K562 (cell line): ENCODE measurements at regions of chr5 and their contacts with region 1.

Region 1: DNA sequence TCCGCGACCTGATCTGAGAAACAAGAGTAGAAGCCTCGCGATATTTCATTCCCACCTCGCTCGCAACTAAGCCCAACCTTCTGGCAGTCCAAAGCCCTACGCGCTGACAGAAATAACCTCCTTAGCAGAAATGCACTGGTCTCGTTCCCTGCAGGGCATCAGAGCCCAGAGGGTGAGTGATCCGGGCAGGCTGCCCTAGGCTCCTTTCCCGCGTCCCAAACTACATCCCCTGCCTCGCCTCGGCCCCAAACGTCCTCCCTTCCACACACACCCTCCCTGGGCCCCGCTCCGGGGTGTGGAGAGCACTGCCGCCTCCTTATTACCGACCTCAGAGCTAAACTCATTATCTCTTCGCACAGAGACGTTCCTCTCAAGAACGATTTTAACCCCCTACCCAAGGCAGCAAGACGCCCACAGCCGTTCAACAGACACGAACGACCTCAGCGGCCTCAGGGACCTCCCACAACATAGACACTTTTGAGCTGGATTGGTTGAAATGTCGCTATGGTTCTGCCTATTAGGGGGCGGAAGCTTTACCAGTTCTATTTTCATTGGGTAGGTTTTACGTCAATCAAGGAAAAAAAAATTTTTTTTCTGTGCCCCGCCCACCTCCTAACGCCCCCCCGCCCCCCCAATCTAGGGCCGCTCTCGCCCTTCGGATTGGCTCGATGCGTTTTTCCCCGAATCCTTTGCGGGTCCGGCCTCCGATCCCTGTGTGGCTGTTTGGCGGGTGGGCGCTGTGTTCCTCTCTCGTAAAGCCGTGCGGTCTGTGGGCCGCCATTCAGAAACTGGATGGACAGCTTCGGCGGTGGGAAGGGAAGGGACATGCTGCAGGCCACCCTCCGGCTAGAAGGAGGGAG is at the start of gene CETN3:
- DNase-seq: peak; percentile 92 to 96 (median 94)
- ATAC-seq: peak; percentile 89
- H3K4me3 ChIP-seq: peak within 1 kb of the TSS; percentile 83
- H3K27ac ChIP-seq: peak within 1 kb of the TSS; percentile 99
- H3K4me1 ChIP-seq: no peaks in the 10 kb centered on the region; a peak in 1 of 5 replicates
- H3K27me3 ChIP-seq: no peaks in the 10 kb centered on the region
- CTCF ChIP-seq: 0 out of 6 replicates have a peak, but pooled peaks of 1 of the 3 experiments have one; percentile 3
- EP300 ChIP-seq: no peak
- POLR2A ChIP-seq: peak; percentile 99
- RAD21 ChIP-seq: no peak
- polyA plus RNA-seq, gene CETN3: 80.5 to 91.3 TPM

Region 2: DNA sequence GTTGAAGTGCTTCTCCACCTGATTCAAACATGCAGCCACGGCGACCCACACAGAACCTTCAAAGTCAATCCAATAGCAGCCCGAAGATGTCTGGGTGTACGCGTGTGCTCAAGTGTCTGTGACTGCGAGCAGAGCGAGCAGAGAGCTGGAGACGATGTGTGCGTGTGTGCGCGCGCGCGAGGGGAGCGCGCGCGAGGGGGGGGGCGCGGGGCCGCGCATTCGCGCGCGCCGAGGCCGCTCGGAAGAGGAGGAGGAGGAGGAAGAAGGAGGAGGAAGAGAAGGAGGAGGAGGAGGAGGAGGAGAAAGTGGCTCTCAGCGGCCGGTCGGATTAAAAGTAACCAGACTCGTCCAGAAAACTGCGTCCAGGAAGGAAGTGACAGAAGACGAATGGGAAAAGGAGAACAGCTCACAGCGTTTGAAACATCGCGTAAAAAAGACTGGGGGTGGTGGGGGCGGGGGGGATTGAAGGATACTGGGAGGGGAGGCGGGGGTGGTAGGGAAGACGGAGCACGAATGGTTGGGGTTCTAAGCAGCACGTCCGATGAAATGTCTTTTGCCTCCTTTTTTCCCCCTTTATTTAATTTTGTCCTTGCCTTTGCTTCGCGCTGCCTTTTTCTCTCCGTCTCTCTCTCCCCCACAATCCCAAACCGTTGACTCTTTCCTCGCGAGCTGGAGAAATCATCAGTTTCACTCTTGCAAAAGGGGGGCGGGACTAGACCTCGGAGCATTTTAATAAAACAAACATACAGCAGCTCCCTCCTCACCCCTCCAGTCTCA is 1526.3 kb before region 1 on chr5 and contains the start of gene MEF2C:
- CTCF ChIA-PET with region 1: no interaction called
- POLR2A ChIA-PET with region 1: no interaction called
- in situ Hi-C with region 1: no loop called
- intact Hi-C with region 1: loop called (anchors 5 kb)
- DNase-seq: peak; percentile 84 to 89 (median 86)
- ATAC-seq: peak; percentile 74
- H3K4me3 ChIP-seq: peak within 1 kb of the TSS; percentile 55
- H3K27ac ChIP-seq: peak within 1 kb of the TSS; percentile 87
- H3K4me1 ChIP-seq: peaks cover 3 to 8% of the 10 kb centered on the region in 2 experiments; a peak in 4 of 5 replicates
- H3K27me3 ChIP-seq: no peaks in the 10 kb centered on the region
- CTCF ChIP-seq: no peak
- EP300 ChIP-seq: peak; percentile 22; the same call in 1 of the 2 replicates
- POLR2A ChIP-seq: peak; percentile 59; the same call in 1 of the 2 replicates
- RAD21 ChIP-seq: no peak
- polyA plus RNA-seq, gene MEF2C: 48.2 to 66.3 TPM

Region 3: DNA sequence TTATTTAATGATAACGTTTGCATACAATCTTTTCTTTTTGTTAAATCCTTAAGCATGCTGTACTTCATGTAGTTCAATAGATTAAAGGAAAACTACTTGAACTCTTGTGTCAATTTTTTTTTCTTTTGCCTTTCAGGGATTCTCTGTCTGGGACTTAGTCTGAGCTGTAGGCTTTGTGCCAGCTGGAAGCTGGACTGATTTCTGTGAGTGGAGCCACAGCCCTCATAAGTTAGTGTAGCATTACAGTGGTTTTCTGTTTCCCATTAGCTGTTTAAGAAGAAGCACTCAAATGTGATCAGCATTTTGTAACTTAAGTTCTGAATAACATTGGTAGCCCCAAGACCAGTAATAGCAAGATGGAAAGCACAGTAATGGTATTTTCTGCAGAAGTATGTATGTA is 1196.0 kb before region 1 on chr5:
- CTCF ChIA-PET with region 1: no interaction called
- POLR2A ChIA-PET with region 1: no interaction called
- in situ Hi-C with region 1: no loop called
- intact Hi-C with region 1: no loop called
- DNase-seq: no peak
- ATAC-seq: no peak
- H3K4me3 ChIP-seq: no peak overlapping the region
- H3K27ac ChIP-seq: no peak overlapping the region
- H3K4me1 ChIP-seq: no peaks in the 10 kb centered on the region
- H3K27me3 ChIP-seq: no peaks in the 10 kb centered on the region
- CTCF ChIP-seq: no peak
- EP300 ChIP-seq: no peak
- POLR2A ChIP-seq: no peak
- RAD21 ChIP-seq: no peak

Region 4: DNA sequence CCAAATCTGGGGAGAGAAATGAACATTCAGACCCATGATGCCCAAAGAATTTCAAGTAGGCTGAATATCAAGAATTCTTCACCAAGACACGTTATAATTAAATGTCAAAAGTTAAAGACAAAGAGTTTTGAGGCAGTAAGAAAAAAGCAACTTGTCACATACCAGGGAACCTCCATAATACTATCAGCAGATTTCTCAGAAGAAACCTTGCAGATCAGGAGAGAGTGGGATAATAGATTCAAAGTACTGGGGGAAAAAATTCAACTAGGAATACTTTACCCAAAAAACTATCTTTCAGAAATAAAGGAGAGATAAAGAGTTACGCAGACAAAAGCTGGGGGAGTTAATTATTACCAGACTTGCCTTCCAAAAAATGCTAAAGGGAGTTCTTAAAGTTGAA is 516.0 kb before region 1 on chr5:
- CTCF ChIA-PET with region 1: no interaction called
- POLR2A ChIA-PET with region 1: no interaction called
- in situ Hi-C with region 1: no loop called
- intact Hi-C with region 1: no loop called
- DNase-seq: no peak
- ATAC-seq: no peak
- H3K4me3 ChIP-seq: no peak overlapping the region
- H3K27ac ChIP-seq: no peak overlapping the region
- H3K4me1 ChIP-seq: no peaks in the 10 kb centered on the region
- H3K27me3 ChIP-seq: no peaks in the 10 kb centered on the region
- CTCF ChIP-seq: no peak
- EP300 ChIP-seq: no peak
- POLR2A ChIP-seq: no peak
- RAD21 ChIP-seq: no peak

Region 5: DNA sequence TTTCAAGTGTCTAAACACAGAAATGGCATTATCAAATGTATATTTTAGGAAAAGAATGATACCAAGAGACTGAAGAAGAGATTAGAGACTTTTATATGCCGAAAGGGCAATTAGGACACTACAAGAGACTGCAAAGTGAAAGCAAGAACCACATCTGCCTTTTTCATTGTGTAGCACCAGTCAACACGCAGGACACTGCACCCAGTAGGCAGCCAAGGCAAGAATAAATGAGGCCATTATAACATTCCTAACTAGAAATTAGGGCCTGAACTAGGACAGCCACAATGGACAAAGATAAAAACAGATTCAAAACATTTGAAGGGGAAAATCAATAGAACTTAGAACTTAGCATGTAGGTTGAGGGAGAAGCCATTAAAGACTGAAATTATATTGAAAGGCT is 10.8 kb before region 1 on chr5:
- CTCF ChIA-PET with region 1: no interaction called
- POLR2A ChIA-PET with region 1: interaction called, 18 read pairs
- in situ Hi-C with region 1: no loop called
- intact Hi-C with region 1: no loop called
- DNase-seq: no peak
- ATAC-seq: peak; percentile 52; the same call in 2 of the 3 replicates
- H3K4me3 ChIP-seq: no peak overlapping the region
- H3K27ac ChIP-seq: no peak overlapping the region
- H3K4me1 ChIP-seq: no peaks in the 10 kb centered on the region
- H3K27me3 ChIP-seq: no peaks in the 10 kb centered on the region
- CTCF ChIP-seq: no peak
- EP300 ChIP-seq: no peak
- POLR2A ChIP-seq: no peak
- RAD21 ChIP-seq: no peak

Region 6: DNA sequence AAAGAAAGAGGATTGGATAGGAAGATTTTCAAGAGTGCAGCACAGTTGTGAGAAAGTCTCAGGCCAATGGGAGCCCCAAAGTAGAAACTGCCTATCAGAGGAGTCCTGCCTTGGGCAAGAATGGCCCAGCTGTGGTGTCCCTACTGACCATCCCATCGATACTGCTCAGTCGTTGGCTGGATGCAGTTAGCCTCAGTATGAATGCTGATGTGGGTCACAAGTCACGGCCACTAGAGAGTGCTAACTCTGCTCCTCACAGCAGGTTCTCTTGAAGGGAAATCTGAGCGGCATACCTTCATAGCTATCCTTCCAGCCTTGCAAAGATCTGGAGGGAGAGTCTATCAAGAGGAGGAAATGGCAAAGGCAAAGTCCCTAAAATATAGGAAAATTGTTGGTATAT is 11.6 kb after region 1 on chr5:
- CTCF ChIA-PET with region 1: no interaction called
- POLR2A ChIA-PET with region 1: interaction called, 25 read pairs
- in situ Hi-C with region 1: no loop called
- intact Hi-C with region 1: no loop called
- DNase-seq: peak in 2 of 4 experiments; percentile 21 to 48
- ATAC-seq: peak; percentile 95
- H3K4me3 ChIP-seq: no peak overlapping the region
- H3K27ac ChIP-seq: no peak overlapping the region
- H3K4me1 ChIP-seq: no peaks in the 10 kb centered on the region
- H3K27me3 ChIP-seq: no peaks in the 10 kb centered on the region
- CTCF ChIP-seq: peak; percentile 53 to 60 (median 55)
- EP300 ChIP-seq: no peak
- POLR2A ChIP-seq: no peak
- RAD21 ChIP-seq: peak; percentile 6 to 57; a peak in 2 of 4 replicates

Region 7: DNA sequence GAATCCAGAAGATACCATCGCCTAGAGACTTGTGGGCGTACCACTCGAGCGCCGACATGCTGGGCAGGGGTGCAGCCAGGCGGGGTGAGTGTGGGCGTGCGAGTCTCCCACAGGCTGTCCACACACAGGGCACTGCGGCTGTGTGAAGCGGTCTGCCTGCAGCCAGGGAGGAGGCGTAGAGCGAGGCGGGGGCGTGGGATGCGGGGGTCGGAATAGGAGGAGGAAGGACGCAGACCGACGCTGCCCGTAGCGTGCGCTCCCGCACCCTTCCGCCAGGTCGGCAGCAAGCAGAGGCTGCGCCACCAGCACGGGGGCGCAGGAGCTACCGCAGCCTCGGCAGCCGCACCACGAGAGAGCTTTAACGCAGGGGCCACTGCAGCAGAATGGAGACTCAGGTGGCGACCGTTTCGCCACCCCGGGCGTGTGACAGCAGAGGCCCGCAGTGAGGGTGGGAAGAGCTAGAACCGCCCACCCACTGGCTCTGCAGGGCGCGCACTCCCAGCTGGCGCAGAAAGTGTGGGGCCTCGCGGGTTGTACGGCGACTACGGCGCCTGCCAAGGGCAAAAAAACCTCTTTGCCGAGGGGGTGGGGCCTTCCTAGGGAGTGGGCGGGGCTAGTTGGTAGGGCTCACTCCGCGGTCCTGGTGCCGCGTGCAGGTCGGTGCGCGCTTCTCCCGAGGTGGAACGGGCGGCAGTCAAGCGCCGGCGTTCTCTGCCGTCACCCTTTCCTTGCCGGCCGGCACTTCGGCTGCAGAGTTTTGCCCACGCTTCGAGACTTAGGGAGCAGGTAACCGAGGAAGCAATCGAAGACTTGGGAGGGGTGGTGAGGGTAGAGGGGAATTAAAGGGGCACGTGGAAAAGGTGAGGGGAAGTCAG is 64.9 kb after region 1 on chr5 and contains the starts of genes MBLAC2 and POLR3G:
- CTCF ChIA-PET with region 1: no interaction called
- POLR2A ChIA-PET with region 1: interaction called, 5 read pairs
- in situ Hi-C with region 1: no loop called
- intact Hi-C with region 1: loop called (anchors 2 kb)
- DNase-seq: peak; percentile 92 to 96 (median 94)
- ATAC-seq: peak; percentile 86
- H3K4me3 ChIP-seq: peak within 1 kb of the TSS; percentile 65
- H3K27ac ChIP-seq: peak within 1 kb of the TSS; percentile 92
- H3K4me1 ChIP-seq: peaks cover 16 to 25% of the 10 kb centered on the region in 2 experiments; a peak in 4 of 5 replicates
- H3K27me3 ChIP-seq: no peaks in the 10 kb centered on the region
- CTCF ChIP-seq: peak; percentile 36 to 84 (median 52)
- EP300 ChIP-seq: no peak; the same call in 1 of the 2 replicates
- POLR2A ChIP-seq: peak; percentile 95
- RAD21 ChIP-seq: no peak
- polyA plus RNA-seq, gene MBLAC2: 2.4 to 3.2 TPM
- polyA plus RNA-seq, gene POLR3G: 95.1 to 111 TPM

Region 8: GRCh38 chr5:90640484-90641059 is 231.0 kb after region 1 on chr5:
- CTCF ChIA-PET with region 1: no interaction called
- POLR2A ChIA-PET with region 1: no interaction called
- in situ Hi-C with region 1: no loop called
- intact Hi-C with region 1: loop called (anchors 5 kb)
- DNase-seq: peak in 1 of 4 experiments; percentile 78
- ATAC-seq: peak; percentile 58
- H3K4me3 ChIP-seq: peak overlapping the region; percentile 1; the same call in 1 of the 2 replicates
- H3K27ac ChIP-seq: peak overlapping the region; percentile 93
- H3K4me1 ChIP-seq: peaks cover 0 to 29% of the 10 kb centered on the region in 2 experiments; a peak in 4 of 5 replicates
- H3K27me3 ChIP-seq: no peaks in the 10 kb centered on the region
- CTCF ChIP-seq: no peak
- EP300 ChIP-seq: peak; percentile 13; the same call in 1 of the 2 replicates
- POLR2A ChIP-seq: no peak
- RAD21 ChIP-seq: no peak